HCT116 (cell line): ENCODE measurements at regions of chr6 and their contacts with region 1.

Region 1: DNA sequence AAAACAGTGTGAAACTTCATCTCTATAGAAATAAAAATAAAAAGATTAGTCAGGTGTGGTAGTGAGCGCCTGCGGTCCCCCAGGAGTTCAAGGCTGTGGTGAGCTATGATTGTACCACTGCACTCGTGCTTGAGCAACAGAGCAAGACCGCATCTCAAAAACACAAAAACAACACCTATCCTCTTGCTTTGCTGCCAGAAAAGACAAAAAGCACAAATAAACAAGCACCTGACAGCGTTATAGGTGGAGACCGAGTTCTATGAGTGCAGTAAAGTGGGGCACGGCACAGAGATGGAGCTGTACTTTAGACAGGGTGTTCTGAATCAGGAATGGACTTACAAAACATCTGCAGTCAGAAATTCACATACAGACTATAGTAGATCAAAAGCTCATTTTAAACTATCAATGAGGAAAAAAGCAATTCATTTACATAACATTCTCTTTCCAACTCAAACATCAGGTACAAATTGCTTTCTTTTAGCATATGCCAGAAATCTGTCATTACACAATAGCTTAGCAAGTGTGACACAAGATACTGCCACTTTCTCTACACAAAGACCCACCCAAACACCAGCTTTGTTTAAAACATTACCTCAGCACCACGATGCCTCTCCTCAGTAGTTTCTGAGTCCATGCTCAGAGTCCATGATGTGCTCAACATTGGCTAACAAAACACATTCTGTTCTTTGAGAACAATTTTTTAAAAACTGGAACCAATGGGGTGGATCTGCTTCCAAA is 10.1 kb downstream of the EZR start:
- DNase-seq: no peak
- ATAC-seq: no peak
- H3K4me3 ChIP-seq: peak overlapping the region in 1 of 2 experiments; percentile 1; a peak in 1 of 4 replicates
- H3K27ac ChIP-seq: peak overlapping the region; percentile 92
- H3K4me1 ChIP-seq: peaks cover 95 to 98% of the 10 kb centered on the region in 2 experiments
- H3K27me3 ChIP-seq: no peaks in the 10 kb centered on the region
- CTCF ChIP-seq: no peak
- POLR2A ChIP-seq: no peak
- RAD21 ChIP-seq: no peak

Region 2: DNA sequence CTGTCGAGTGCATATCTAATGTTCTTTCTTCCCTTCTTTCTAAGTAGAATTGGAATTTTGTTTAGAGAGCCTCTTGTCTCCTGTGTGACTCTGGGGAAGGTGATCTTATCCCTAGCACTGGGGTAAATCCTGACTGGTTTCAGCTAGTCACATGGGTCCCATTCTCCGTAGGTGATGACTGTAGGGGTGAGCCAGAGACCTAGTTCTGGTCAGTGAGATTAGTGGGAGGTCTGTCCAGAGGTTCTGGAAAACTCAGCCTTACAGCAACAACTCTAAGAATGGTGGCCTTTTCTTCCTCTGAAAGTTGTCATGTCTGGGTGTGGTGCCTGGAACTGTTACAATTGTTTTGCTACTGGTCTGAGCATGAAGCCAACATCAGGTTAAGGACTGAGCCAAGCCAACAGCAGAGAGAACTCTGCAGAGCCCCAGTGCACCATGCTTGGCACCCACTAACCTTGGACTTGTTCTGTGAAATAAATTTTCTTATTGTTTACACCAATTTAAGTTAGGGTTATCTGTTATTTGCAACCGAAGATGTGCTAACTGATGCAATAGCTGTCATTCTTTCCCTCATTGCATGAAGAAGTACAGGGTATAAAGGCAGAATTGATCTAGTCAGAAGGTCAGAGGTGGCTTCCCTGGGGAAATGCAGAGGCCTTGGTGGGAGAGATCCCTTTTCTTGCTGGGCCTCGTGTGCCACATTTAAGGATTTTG is 553.7 kb before region 1 on chr6:
- CTCF ChIA-PET with region 1: no interaction called
- POLR2A ChIA-PET with region 1: no interaction called
- RAD21 ChIA-PET with region 1: no interaction called
- intact Hi-C with region 1: no loop called
- DNase-seq: no peak
- ATAC-seq: no peak
- H3K4me3 ChIP-seq: no peak overlapping the region
- H3K27ac ChIP-seq: no peak overlapping the region
- H3K4me1 ChIP-seq: no peaks in the 10 kb centered on the region
- H3K27me3 ChIP-seq: no peaks in the 10 kb centered on the region
- CTCF ChIP-seq: no peak
- POLR2A ChIP-seq: no peak
- RAD21 ChIP-seq: no peak

Region 3: GRCh38 chr6:158548418-158549161 is 260.5 kb before region 1 on chr6:
- CTCF ChIA-PET with region 1: no interaction called
- POLR2A ChIA-PET with region 1: no interaction called
- RAD21 ChIA-PET with region 1: no interaction called
- intact Hi-C with region 1: no loop called
- DNase-seq: no peak
- ATAC-seq: no peak
- H3K4me3 ChIP-seq: no peak overlapping the region
- H3K27ac ChIP-seq: no peak overlapping the region
- H3K4me1 ChIP-seq: no peaks in the 10 kb centered on the region
- H3K27me3 ChIP-seq: no peaks in the 10 kb centered on the region
- CTCF ChIP-seq: no peak
- POLR2A ChIP-seq: no peak
- RAD21 ChIP-seq: no peak

Region 4: DNA sequence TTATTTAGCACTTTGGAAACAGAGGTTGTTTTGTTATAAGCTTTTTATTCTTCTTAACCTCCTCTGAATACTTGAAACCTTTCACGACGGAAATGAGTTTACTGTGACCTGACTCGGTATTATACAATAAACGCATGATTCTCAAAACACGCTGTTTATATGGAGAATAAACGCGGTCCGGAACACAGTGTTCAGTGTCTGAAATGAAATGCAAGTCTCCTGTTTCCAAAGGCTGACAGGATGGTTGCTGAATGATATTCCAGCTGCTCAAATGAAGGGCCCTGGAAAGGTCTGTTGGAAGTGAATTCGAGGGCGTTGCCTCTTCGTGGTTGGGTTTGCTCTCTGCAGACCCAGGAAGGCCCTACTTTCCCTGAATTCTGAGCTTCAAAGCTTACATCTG is 107.5 kb after region 1 on chr6:
- CTCF ChIA-PET with region 1: no interaction called
- POLR2A ChIA-PET with region 1: interaction called, 3 read pairs
- RAD21 ChIA-PET with region 1: no interaction called
- intact Hi-C with region 1: loop called (anchors 5 kb)
- DNase-seq: no peak
- ATAC-seq: no peak
- H3K4me3 ChIP-seq: no peak overlapping the region
- H3K27ac ChIP-seq: no peak overlapping the region; the same call in 1 of the 2 replicates
- H3K4me1 ChIP-seq: peaks cover 34 to 54% of the 10 kb centered on the region in 2 experiments
- H3K27me3 ChIP-seq: no peaks in the 10 kb centered on the region
- CTCF ChIP-seq: no peak
- POLR2A ChIP-seq: no peak
- RAD21 ChIP-seq: no peak